Prostate gland (tissue), 2 donors: ENCODE measurements at regions of chr10 and their contacts with region 1.

Region 1: DNA sequence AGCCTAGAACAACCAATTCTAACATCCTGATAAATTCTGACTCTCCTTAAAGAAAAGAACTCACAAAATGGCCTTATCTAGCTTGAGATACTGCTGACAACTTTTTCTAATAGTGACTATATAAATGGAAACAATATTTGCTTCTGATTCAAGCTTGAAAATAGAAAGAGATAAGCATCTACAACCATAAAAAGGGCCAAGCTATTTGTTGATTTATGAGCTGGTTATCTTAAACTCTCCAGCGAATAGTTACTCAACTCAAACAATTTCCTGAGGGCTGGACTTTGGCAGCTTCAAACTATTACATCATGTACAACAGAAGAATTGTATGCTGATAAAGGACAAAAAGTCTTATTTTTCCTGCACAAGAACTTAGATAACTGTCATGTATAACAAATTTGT is 4.6 kb downstream of the USP54 start:
- DNase-seq: peak; percentile 69
- H3K4me3 ChIP-seq: no peak overlapping the region
- H3K27ac ChIP-seq: peak overlapping the region; percentile 60 to 67
- H3K4me1 ChIP-seq: peaks cover 14% of the 10 kb centered on the region
- H3K27me3 ChIP-seq: no peaks in the 10 kb centered on the region
- CTCF ChIP-seq: no peak
- POLR2A ChIP-seq: no peak

Region 2: DNA sequence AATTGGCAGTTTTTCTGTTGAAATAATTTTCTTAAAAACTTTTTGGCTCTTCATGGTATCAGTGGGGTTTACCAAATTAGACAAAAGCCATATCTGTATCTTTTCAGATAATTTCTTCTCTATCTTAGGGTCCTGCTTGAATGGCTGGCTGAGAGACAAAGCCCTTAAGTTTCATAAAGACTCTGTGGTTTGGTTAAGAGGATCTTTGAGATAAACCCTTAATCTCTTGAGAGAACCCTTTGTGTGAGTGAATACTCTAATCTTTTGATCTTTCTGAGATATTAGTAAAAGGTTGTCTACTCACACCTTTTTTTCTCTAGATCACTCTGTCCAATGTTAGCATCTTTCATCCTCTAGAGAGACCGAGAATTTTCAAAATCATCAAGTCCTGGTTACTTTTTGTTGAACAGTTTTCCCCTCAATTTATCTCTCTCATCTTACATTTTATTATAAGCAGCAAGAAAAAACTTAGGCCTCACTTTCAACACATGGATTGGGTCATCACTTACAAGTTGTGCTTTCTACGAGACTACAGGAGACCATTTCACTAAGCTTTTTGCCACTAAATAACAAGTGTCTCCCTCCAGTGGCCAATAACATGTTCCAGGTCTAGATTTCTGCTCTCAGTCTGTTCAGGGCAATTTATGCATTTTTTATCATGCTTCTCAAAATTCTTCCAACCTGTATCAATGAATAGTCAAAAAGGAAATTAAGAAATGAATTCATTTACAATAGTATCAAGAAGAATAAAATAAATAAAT is 368.0 kb before region 1 on chr10:
- intact Hi-C with region 1: no loop called
- DNase-seq: no peak
- H3K4me3 ChIP-seq: no peak overlapping the region
- H3K27ac ChIP-seq: no peak overlapping the region
- H3K4me1 ChIP-seq: no peaks in the 10 kb centered on the region
- H3K27me3 ChIP-seq: no peaks in the 10 kb centered on the region
- CTCF ChIP-seq: no peak
- POLR2A ChIP-seq: no peak

Region 3: GRCh38 chr10:73552819-73553715 is 33.5 kb before region 1 on chr10:
- intact Hi-C with region 1: loop called (anchors 5 kb)
- DNase-seq: peak; percentile 39
- H3K4me3 ChIP-seq: no peak overlapping the region
- H3K27ac ChIP-seq: peak overlapping the region; percentile 33 to 64
- H3K4me1 ChIP-seq: peaks cover 11% of the 10 kb centered on the region
- H3K27me3 ChIP-seq: no peaks in the 10 kb centered on the region
- CTCF ChIP-seq: no peak
- POLR2A ChIP-seq: no peak